ENCODE measurements at regions of chr3 and their contacts with region 1.

Region 1: GRCh38 chr3:30751610-30752299 is 142.7 kb downstream of the GADL1 start:
- DNase-seq: peak; percentile 55
- H3K4me3 ChIP-seq: no peak overlapping the region
- H3K27ac ChIP-seq: no peak overlapping the region
- H3K4me1 ChIP-seq: no peaks in the 10 kb centered on the region
- CTCF ChIP-seq: peak; percentile 82

Region 2: GRCh38 chr3:30112902-30113484 is 638.8 kb before region 1 on chr3:
- CTCF ChIA-PET with region 1: no interaction called
- POLR2A ChIA-PET with region 1: no interaction called
- intact Hi-C with region 1: loop called (anchors 5 kb)
- DNase-seq: peak; percentile 45
- H3K4me3 ChIP-seq: no peak overlapping the region
- H3K27ac ChIP-seq: no peak overlapping the region
- H3K4me1 ChIP-seq: no peaks in the 10 kb centered on the region
- CTCF ChIP-seq: peak; percentile 80